Sciatic nerve (tissue), 2 donors: ENCODE measurements at regions of chr15 and their contacts with region 1.

Region 1: DNA sequence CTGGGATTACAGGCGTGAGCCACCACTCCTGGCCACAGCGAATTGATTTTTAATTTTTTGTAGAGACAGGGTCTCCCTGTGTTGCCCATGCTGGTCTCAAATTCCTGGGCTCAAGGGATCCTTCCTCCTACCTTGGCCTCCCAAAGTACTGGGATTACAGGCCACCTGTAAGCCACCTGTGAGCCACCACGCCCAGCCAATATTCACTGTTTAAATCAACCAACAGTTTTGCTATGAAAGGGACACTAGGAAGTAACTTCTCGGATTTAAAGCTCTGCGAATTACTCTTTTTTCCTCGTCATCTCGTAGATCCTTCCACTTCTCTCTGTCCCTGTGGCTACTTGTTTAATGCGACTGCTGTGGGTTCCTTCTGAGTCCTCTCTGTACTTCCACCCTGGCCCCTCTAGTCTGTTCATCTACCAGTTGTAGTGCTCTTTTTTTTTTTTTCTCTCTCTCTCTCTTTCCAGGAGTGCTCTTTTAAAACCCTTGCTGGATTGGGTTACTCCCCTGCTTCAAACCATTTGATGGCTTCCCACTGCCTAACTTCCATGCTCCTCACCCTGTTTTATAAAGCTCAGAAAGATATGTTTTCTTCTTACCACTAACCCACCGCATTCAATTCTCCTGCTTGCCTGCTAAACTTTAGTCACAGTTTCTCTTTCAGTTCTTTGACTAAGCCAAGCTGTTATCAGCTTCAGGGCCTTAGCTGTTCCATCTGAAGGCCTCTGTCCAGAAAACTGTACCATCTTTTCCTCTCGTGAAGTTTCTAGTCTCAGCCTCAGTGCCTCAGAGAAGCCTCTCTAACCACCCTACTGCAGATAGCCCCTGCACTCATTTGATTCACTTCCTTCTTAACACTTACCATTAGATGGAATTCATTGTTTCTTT is 12.4 kb downstream of the RTF1 start:
- DNase-seq: no peak
- ATAC-seq: no peak

Region 2: DNA sequence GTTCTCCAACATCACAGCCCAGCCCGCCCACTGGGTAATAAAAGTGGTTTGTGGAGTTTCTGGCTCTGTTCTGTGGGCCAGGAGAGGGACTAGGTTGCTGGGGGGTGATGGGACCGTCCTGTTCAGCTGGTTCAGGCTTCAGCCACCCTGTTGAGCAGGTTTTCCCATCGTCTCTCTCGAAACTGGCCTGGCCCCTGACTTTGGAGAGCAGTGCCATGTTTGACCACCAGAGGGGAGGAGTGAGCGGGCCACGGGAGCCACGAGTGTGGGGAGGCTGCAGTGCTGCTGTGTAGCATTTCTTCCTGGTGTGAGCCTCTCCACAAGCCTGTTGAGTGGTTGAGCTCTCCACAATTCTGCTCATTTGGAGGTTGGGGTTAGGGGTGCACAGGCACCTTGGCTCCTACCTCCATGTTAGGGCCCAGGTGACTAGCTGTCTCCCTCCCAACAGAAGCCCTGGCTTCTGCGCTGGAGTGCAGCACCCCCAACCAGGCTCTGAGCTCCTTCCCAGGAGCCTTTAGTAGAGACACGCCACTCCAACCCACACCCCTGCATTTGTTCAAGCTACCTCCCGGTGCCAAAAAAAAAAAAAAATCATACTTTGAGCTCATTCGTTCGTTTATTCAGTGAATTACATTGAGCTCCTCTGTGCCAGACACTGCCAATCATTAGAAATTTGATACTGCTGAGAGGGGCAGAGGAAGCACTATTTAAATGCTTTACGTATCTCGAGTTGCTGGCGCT is 571.5 kb before region 1 on chr15:
- intact Hi-C with region 1: no loop called
- DNase-seq: peak; percentile 82
- ATAC-seq: peak; percentile 88

Region 3: DNA sequence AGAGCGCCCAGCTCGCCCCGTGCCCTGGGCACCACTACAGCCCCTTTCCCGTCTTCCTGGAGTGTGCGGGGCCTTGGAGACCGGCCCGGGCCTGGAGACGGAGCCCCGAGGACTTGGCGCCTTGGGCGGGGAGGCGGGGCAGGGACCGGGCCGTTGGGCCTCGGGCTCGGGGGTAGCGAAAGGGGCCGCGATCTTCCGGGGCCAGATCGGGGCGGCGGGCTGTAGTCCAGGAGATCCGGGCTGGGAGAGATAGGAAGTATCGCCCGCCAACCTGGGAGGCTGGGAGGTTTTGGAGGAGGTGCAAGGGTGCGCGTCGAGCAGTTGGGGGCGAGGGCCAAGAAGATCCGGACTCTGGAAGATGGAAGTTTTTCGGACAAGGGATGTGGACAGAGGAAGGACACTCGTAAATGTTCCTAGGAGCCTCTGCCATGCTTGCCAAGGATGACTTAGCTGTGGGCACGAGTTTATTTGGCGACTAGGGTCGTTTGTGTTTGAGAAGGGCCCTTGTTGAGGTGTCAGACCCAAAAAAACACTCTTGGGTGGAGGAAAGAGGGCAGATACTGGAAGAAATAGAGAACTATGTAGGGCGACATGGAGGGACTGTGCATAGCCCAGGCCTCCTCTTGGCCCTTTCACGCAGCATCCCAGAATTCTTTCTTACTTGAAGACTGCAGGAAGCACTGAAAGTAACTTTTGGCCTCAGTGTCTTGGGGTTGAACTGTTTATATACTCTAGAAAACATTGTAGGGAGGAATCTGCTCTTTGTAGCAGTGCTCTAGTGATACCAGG is 11.6 kb before region 1 on chr15:
- intact Hi-C with region 1: loop called (anchors 2 kb)
- DNase-seq: peak; percentile 70
- ATAC-seq: peak; percentile 24